CD14-positive monocyte (primary cell): ENCODE measurements at regions of chr1 and their contacts with region 1.

Region 1: GRCh38 chr1:230066466-230067404 is at the start of gene GALNT2:
- DNase-seq: peak; percentile 80 to 89 (median 88)
- H3K4me3 ChIP-seq: peak within 1 kb of the TSS; percentile 80 to 91 (median 82)
- H3K4me3 Mint-ChIP-seq: peak within 1 kb of the TSS; percentile 95 to 96
- H3K27ac ChIP-seq: peak within 1 kb of the TSS; percentile 53 to 86
- H3K27ac Mint-ChIP-seq: peak within 1 kb of the TSS; percentile 83 to 96 (median 94)
- H3K4me1 ChIP-seq: peaks cover 24 to 31% of the 10 kb centered on the region in 2 donors
- H3K4me1 Mint-ChIP-seq: peaks cover 49% of the 10 kb centered on the region
- H3K27me3 ChIP-seq: no peaks in the 10 kb centered on the region
- H3K27me3 Mint-ChIP-seq: peaks cover 1 to 3% (median 2%) of the 10 kb centered on the region in 3 donors
- CTCF ChIP-seq: no peak
- polyA plus RNA-seq, gene GALNT2: 19.6 to 25.6 (median 23.4) TPM

Region 2: DNA sequence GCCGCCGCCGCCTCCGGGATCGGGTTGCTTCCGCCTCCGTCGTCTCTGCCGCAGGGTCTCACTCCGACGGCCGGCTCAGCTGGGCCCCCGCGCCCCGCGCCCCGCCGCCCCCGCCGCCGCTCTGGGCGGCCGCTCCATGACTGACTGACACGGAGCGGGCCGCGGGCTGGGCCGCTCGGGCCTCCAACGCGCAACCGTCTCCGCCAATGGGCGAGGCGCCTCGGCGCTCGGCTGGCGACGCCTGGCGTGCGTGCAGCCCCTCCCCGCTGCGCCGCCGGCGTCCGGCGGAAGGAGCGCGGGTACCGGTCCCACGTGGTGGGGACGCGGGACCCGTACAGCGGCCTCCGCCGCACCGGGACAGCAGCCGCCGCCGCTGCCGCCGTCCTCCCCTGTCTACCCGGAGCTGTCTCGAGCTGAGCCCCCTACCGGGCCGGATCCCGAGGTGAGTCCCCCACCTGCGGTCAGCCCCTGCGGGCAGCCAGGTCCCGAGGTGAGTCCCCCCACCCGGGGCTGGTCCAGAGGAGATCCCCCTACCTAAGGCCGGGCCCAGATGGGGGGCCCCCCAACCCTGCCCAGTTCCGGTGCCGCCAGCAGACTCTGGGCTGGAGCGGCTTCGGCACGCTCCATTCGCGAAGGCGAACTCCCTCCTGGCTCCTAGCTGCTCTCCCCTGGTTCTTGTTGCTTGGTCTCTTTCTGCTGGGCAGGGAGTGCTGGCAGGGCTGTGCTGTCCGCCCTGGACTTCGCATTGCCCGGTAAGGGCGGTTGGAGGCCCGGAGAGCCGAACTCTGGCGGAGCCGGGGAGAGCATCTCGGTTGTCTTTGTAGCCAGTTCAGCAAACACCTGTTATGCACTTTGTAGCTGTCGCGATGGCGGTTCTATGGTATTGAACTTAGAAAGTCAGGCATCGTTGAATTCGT is 440.6 kb before region 1 on chr1 and contains the starts of genes TAF5L and URB2:
- intact Hi-C with region 1: loop called (anchors 10 kb)
- DNase-seq: peak; percentile 76 to 86 (median 83)
- H3K4me3 ChIP-seq: peak within 1 kb of the TSS; percentile 83 to 97 (median 89)
- H3K4me3 Mint-ChIP-seq: peak within 1 kb of the TSS; percentile 94 to 99
- H3K27ac ChIP-seq: peak within 1 kb of the TSS; percentile 40 to 84
- H3K27ac Mint-ChIP-seq: peak within 1 kb of the TSS; percentile 73 to 93 (median 91)
- H3K4me1 ChIP-seq: peaks cover 20 to 30% of the 10 kb centered on the region in 2 donors
- H3K4me1 Mint-ChIP-seq: peaks cover 39% of the 10 kb centered on the region
- H3K27me3 ChIP-seq: no peaks in the 10 kb centered on the region
- H3K27me3 Mint-ChIP-seq: no peaks in the 10 kb centered on the region
- CTCF ChIP-seq: no peak
- polyA plus RNA-seq, gene TAF5L: 3.8 to 15.4 (median 4.9) TPM
- polyA plus RNA-seq, gene URB2: 0.79 to 2.8 (median 1.5) TPM

Region 3: DNA sequence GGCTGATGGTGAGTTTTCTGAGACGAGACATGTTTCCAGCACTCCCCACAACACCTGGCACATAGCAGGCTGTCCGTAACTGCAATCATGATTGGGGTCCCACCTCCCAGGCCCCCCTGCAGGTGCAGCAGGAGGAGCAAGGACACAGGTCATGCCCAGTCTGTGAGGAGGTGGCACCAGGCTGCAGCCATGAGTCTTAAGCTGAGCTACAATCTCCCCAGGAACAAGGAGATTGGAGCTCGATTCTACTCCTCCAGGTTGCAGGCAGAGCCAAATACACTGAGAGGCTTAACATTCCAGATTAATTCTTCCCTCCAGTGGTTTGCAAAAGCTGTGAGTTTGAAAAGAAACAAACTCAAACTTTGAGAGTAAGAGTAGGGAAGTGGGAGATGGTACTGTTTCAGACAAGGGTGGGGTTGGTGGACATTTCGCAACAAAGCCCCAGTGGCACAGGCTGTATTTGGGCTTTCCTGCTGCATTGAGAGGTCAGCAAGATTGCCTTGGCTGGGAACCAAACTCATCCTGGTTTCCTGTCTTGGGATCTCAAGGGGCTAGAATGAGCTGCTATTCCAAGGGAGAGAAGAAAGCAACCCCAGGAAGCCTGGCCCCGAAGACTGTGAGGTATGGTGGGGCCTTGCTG is 64.5 kb before region 1 on chr1:
- intact Hi-C with region 1: loop called (anchors 10 kb)
- DNase-seq: peak; percentile 32 to 58 (median 42)
- H3K4me3 ChIP-seq: peak overlapping the region; percentile 5 to 64 (median 23)
- H3K4me3 Mint-ChIP-seq: peak overlapping the region; percentile 55 to 84
- H3K27ac ChIP-seq: peak overlapping the region; percentile 59 to 88
- H3K27ac Mint-ChIP-seq: peak overlapping the region; percentile 82 to 93 (median 91)
- H3K4me1 ChIP-seq: peaks cover 41 to 44% of the 10 kb centered on the region in 2 donors
- H3K4me1 Mint-ChIP-seq: peaks cover 51% of the 10 kb centered on the region
- H3K27me3 ChIP-seq: no peaks in the 10 kb centered on the region
- H3K27me3 Mint-ChIP-seq: peaks cover 0 to 2% (median 0%) of the 10 kb centered on the region in 3 donors
- CTCF ChIP-seq: no peak

Region 4: GRCh38 chr1:230016159-230016558 is 50.6 kb before region 1 on chr1:
- intact Hi-C with region 1: no loop called
- DNase-seq: no peak
- H3K4me3 ChIP-seq: no peak overlapping the region
- H3K4me3 Mint-ChIP-seq: no peak overlapping the region
- H3K27ac ChIP-seq: no peak overlapping the region
- H3K27ac Mint-ChIP-seq: no peak overlapping the region
- H3K4me1 ChIP-seq: peaks cover 14 to 27% of the 10 kb centered on the region in 2 donors
- H3K4me1 Mint-ChIP-seq: peaks cover 24% of the 10 kb centered on the region
- H3K27me3 ChIP-seq: no peaks in the 10 kb centered on the region
- H3K27me3 Mint-ChIP-seq: peaks cover 0 to 5% (median 2%) of the 10 kb centered on the region in 3 donors
- CTCF ChIP-seq: no peak

Region 5: GRCh38 chr1:230031131-230031530 is 35.6 kb before region 1 on chr1:
- intact Hi-C with region 1: loop called (anchors 5 kb)
- DNase-seq: peak; percentile 86 to 95 (median 92)
- H3K4me3 ChIP-seq: no peak overlapping the region
- H3K4me3 Mint-ChIP-seq: no peak overlapping the region
- H3K27ac ChIP-seq: peak overlapping the region in 1 of 2 donors; percentile 50
- H3K27ac Mint-ChIP-seq: peak overlapping the region in 6 of 7 donors; percentile 33 to 84 (median 61)
- H3K4me1 ChIP-seq: peaks cover 11 to 14% of the 10 kb centered on the region in 2 donors
- H3K4me1 Mint-ChIP-seq: peaks cover 9% of the 10 kb centered on the region
- H3K27me3 ChIP-seq: no peaks in the 10 kb centered on the region
- H3K27me3 Mint-ChIP-seq: peaks cover 0 to 1% (median 0%) of the 10 kb centered on the region in 3 donors
- CTCF ChIP-seq: no peak

Region 6: GRCh38 chr1:230104395-230105244 is 37.9 kb after region 1 on chr1:
- intact Hi-C with region 1: loop called in 1 of 2 experiments (anchors 5 kb)
- DNase-seq: peak; percentile 79 to 96 (median 87)
- H3K4me3 ChIP-seq: peak overlapping the region in 1 of 3 experiments; percentile 51
- H3K4me3 Mint-ChIP-seq: peak overlapping the region; percentile 9 to 73
- H3K27ac ChIP-seq: peak overlapping the region; percentile 9 to 65
- H3K27ac Mint-ChIP-seq: peak overlapping the region; percentile 40 to 92 (median 85)
- H3K4me1 ChIP-seq: peaks cover 41 to 53% of the 10 kb centered on the region in 2 donors
- H3K4me1 Mint-ChIP-seq: peaks cover 60% of the 10 kb centered on the region
- H3K27me3 ChIP-seq: no peaks in the 10 kb centered on the region
- H3K27me3 Mint-ChIP-seq: peaks cover 0 to 3% (median 0%) of the 10 kb centered on the region in 3 donors
- CTCF ChIP-seq: no peak

Region 7: DNA sequence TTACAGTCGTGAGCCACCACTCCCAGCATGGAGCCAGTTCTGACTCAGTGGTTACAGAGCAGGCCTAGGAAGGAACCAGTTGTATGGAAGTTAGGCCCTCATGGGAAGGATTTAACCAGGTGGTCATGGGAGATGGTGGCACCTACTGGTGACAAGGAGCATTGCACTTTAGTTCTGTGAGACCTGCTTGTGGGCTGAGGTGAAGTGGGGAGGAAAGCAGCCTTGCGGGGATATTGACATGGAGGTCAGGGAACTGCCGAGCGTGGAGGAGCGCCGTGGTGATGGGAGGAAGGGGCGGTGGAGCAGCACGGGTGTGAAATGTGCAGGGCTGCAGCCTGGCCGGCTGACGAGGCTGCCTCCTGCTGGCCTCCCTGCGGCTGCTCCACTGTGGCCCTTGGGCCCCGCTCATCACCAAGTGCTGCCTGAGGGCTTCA is 100.7 kb after region 1 on chr1:
- intact Hi-C with region 1: loop called in 1 of 2 experiments (anchors 10 kb)
- DNase-seq: peak; percentile 51 to 70 (median 69)
- H3K4me3 ChIP-seq: no peak overlapping the region
- H3K4me3 Mint-ChIP-seq: no peak overlapping the region
- H3K27ac ChIP-seq: peak overlapping the region in 1 of 2 donors; percentile 42
- H3K27ac Mint-ChIP-seq: peak overlapping the region in 2 of 7 donors; percentile 48 to 75
- H3K4me1 ChIP-seq: peaks cover 8 to 15% of the 10 kb centered on the region in 2 donors
- H3K4me1 Mint-ChIP-seq: peaks cover 39% of the 10 kb centered on the region
- H3K27me3 ChIP-seq: no peaks in the 10 kb centered on the region
- H3K27me3 Mint-ChIP-seq: no peaks in the 10 kb centered on the region
- CTCF ChIP-seq: peak; percentile 96

Region 8: DNA sequence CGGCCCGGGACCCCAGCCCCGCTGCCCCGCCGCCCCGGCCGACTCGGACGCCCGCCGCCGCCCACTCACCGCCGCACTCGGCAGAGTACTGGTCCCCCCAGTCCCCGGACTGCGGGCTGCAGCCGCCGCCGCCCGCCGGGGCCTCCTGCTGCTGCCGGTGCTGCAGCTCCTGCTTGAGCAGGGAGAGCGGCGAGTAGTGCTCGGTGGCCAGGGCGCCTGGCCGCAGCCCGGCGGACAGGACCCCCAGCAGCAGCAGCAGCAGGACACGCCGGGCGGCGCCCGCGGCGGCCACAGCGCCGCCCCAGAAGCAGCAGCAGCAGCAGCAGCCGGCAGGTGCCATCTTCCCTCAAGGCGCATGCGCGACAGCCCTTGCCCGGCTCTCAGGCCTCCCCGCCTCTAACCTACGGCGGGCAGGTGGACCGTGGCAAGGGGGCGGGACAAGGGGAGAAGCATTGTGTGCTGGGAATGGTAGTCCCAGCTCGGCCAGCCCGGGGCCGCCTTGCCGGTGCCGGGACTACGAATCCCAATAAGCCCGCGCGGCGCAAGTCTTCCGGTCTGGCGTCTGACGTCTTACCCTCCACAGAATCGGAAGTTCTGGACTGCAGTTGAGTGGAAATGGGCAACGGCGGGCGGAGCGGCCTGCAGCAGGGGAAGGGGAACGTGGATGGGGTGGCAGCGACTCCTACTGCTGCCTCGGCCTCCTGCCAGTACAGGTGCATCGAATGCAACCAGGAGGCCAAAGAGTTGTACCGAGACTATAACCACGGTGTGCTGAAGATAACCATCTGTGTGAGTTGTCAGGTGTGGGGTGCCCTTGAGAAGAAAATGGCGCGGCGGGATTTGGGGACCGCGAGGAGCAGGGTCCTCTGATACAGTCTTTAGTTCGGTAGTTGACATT is 912.0 kb after region 1 on chr1 and contains the starts of genes ARV1 and TTC13:
- intact Hi-C with region 1: no loop called
- DNase-seq: peak; percentile 96 to 99 (median 99)
- H3K4me3 ChIP-seq: peak within 1 kb of the TSS; percentile 60 to 81 (median 66)
- H3K4me3 Mint-ChIP-seq: peak within 1 kb of the TSS; percentile 90 to 98
- H3K27ac ChIP-seq: peak within 1 kb of the TSS; percentile 41 to 80
- H3K27ac Mint-ChIP-seq: peak within 1 kb of the TSS; percentile 89 to 96 (median 95)
- H3K4me1 ChIP-seq: peaks cover 31 to 36% of the 10 kb centered on the region in 2 donors
- H3K4me1 Mint-ChIP-seq: peaks cover 22% of the 10 kb centered on the region
- H3K27me3 ChIP-seq: no peaks in the 10 kb centered on the region
- H3K27me3 Mint-ChIP-seq: peaks cover 0 to 2% (median 0%) of the 10 kb centered on the region in 3 donors
- CTCF ChIP-seq: peak; percentile 60
- polyA plus RNA-seq, gene ARV1: 7.7 to 19.2 (median 15.0) TPM
- polyA plus RNA-seq, gene TTC13: 9.2 to 24.4 (median 10.8) TPM